ENCODE measurements at regions of chr2 and their contacts with region 1.

Region 1: DNA sequence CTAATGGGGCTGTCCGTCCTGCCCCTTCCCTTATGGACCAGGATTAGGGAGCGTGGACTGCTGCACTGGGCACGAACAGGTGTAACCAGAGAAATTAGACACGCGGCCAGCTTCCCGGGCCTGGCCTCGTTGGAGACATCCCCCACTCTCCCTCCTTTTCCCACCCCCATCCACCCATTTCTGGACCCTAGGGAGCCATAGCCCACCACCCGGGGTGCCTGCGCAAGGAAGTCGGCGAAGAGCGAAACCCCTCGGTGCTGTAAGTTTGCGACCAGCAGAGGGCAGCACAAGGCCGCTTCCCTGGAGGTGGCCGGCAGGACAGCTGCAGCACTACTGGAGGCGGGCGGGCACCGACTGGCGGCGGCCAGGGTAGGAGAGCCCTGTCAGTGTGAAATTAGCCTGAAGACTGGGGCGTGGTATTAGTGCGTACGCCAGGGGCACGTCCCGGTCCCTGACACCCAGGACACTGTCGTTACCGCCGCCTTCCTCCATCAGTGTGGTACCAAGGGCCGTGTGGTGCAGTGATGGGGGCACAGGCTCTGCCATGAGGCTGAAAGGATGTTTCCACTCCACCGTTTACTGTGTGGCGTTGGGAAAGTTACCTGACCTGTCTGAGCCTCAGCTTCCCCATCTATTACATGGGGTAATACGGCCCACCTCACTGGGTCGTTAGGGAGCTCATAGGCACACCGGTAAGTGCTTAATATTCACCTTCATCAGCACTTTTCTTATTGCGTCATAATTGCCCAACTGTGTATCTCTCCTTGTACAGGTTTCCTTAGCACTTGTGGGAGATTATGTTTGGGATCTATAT is 36.0 kb upstream of the CD207 start:
- DNase-seq: peak; percentile 79 to 86
- H3K4me3 ChIP-seq: no peak overlapping the region
- H3K27ac ChIP-seq: no peak overlapping the region
- H3K4me1 ChIP-seq: peaks cover 0 to 11% (median 8%) of the 10 kb centered on the region in 4 donors
- H3K27me3 ChIP-seq: peaks cover 0 to 61% of the 10 kb centered on the region in 2 donors
- CTCF ChIP-seq: peak; percentile 87 to 91

Region 2: GRCh38 chr2:70835643-70836042 is 36.0 kb before region 1 on chr2 and contains the start of gene CD207:
- intact Hi-C with region 1: no loop called
- DNase-seq: no peak
- H3K4me3 ChIP-seq: no peak within 1 kb of the TSS
- H3K27ac ChIP-seq: no peak within 1 kb of the TSS
- H3K4me1 ChIP-seq: peaks cover 0 to 4% (median 0%) of the 10 kb centered on the region in 4 donors
- H3K27me3 ChIP-seq: no peaks in the 10 kb centered on the region
- CTCF ChIP-seq: no peak

Region 3: DNA sequence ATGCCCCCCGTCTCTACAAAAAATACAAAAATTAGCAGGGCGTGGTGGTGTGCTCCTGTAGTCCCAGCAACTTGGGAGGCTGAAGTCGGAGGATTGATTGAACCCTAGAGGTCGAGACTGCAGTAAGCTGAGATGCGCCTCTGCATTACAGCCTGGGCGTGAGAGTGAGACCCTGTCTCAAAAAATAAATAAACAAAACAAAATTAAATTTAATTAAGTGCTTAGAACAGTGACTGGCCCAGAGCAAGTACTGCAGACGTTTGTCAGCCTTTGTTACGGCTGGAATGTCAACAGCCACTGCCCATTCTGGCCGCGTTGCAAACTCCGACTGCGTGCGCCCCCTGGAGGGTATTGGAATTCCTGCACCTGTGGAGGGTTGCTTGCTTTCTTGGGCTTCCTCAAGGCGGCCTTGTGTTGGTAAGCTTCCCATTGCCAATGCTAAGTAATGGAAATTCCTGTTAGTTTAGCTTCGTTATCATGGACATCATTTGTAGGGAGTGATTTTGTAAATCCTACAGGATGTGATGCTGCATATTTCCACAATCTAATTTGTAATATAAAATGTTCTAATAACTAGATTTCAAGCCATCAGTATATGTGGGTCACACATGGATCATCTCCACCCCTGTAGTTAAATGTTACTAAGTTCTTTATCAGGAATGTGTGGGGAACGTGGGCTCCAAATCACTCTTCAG is 48.2 kb after region 1 on chr2:
- intact Hi-C with region 1: loop called (anchors 5 kb)
- DNase-seq: peak; percentile 76 to 84
- H3K4me3 ChIP-seq: no peak overlapping the region
- H3K27ac ChIP-seq: no peak overlapping the region
- H3K4me1 ChIP-seq: no peaks in the 10 kb centered on the region
- H3K27me3 ChIP-seq: peaks cover 0 to 8% of the 10 kb centered on the region in 2 donors
- CTCF ChIP-seq: peak; percentile 66 to 74

Region 4: GRCh38 chr2:72475272-72475671 is 1603.7 kb after region 1 on chr2:
- intact Hi-C with region 1: no loop called
- DNase-seq: peak in 1 of 2 donors; percentile 34
- H3K4me3 ChIP-seq: no peak overlapping the region
- H3K27ac ChIP-seq: no peak overlapping the region
- H3K4me1 ChIP-seq: no peaks in the 10 kb centered on the region
- H3K27me3 ChIP-seq: no peaks in the 10 kb centered on the region
- CTCF ChIP-seq: no peak